ENCODE measurements at regions of chr2 and their contacts with region 1.

Region 1: GRCh38 chr2:173402405-173402974 is 47.8 kb downstream of the CDCA7 start:
- DNase-seq: peak; percentile 75 to 83
- H3K4me3 ChIP-seq: no peak overlapping the region
- H3K27ac ChIP-seq: no peak overlapping the region
- H3K4me1 ChIP-seq: no peaks in the 10 kb centered on the region
- H3K27me3 ChIP-seq: no peaks in the 10 kb centered on the region
- CTCF ChIP-seq: peak; percentile 47 to 90 (median 82)
- POLR2A ChIP-seq: no peak

Region 2: DNA sequence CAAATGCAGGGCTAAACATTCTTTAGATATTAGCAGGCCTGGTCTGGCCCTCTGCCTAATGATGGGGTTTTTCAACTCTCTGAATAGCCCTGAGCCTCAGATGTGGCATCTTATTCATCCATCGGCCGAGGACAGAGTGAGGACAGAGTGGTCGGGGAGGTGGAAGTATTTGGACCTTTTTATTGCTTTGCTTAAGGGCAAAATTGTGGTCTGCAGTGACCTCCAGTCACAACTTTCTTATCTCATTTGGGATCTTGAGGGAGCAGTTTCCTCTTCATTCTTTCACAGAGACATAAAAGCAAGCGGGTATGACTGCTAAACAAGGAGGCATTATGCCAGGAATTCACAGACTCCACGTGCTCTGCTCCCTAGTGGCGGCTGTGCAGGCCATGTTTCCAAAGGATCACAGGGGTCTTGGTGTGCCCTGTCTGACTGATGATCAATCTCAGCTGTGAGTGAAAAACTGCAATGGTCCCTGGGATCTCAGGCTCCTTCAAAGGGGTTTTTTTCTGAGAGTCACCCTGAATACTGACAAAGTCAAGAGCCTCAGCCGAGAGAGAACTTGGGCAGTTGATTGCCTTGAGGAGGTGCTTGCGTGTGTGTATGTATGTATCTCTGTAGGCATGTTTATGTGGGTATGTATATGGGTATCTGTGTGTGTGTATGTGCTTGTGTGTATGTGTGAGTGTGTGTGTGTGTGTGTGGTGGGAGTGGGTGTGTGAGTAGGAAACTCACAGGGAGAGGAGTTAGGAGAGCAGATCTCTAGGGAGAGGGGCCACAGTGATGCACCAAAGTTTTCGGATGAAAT is 619.2 kb before region 1 on chr2:
- intact Hi-C with region 1: no loop called
- DNase-seq: no peak
- H3K4me3 ChIP-seq: no peak overlapping the region
- H3K27ac ChIP-seq: no peak overlapping the region
- H3K4me1 ChIP-seq: no peaks in the 10 kb centered on the region
- H3K27me3 ChIP-seq: no peaks in the 10 kb centered on the region
- CTCF ChIP-seq: no peak
- POLR2A ChIP-seq: no peak

Region 3: GRCh38 chr2:173448938-173449471 is 46.5 kb after region 1 on chr2:
- intact Hi-C with region 1: loop called (anchors 5 kb)
- DNase-seq: peak; percentile 72 to 85
- H3K4me3 ChIP-seq: no peak overlapping the region
- H3K27ac ChIP-seq: no peak overlapping the region
- H3K4me1 ChIP-seq: no peaks in the 10 kb centered on the region
- H3K27me3 ChIP-seq: no peaks in the 10 kb centered on the region
- CTCF ChIP-seq: peak in 5 of 6 experiments; percentile 50 to 74 (median 59)
- POLR2A ChIP-seq: no peak

Region 4: DNA sequence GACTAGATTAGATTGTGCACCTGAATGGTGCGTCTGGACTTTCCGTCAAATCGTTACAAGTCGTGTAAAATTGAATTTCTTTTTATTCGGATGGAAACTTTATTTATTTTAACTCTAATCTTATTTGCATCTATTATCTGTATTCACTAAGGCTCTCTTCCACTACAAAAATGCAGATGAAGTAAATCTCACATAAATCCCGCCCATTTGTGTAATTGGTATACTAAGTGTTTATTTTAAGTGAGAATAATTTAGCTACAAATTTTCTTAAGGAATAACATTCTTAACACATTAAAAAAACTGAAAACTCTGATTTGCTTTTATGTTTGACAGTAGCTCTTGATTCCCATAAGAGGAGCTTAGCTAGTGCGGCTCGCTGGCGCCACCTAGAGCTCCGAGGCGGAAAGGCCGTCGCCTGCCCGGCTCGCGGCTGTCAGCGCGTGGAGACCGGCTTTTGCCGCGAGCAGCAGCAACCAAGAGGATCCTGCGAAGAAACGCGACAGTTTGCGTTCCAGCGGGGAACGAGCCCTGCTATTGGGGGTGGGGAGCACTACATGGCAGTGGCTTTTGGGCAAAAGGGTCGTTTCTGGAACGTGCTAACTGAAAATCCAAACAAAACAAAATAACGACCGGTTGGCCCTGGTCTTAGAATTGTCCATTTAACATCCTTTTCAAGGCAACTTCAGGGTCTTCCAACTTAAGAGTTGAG is 939.0 kb after region 1 on chr2:
- intact Hi-C with region 1: loop called (anchors 5 kb)
- DNase-seq: peak; percentile 83 to 85
- H3K4me3 ChIP-seq: no peak overlapping the region
- H3K27ac ChIP-seq: no peak overlapping the region
- H3K4me1 ChIP-seq: peaks cover 10 to 37% of the 10 kb centered on the region in 2 donors
- H3K27me3 ChIP-seq: peaks cover 74% of the 10 kb centered on the region
- CTCF ChIP-seq: peak; percentile 88 to 98 (median 95)
- POLR2A ChIP-seq: no peak